CD4-positive, alpha-beta T cell (primary cell): ENCODE measurements at regions of chr17 and their contacts with region 1.

Region 1: DNA sequence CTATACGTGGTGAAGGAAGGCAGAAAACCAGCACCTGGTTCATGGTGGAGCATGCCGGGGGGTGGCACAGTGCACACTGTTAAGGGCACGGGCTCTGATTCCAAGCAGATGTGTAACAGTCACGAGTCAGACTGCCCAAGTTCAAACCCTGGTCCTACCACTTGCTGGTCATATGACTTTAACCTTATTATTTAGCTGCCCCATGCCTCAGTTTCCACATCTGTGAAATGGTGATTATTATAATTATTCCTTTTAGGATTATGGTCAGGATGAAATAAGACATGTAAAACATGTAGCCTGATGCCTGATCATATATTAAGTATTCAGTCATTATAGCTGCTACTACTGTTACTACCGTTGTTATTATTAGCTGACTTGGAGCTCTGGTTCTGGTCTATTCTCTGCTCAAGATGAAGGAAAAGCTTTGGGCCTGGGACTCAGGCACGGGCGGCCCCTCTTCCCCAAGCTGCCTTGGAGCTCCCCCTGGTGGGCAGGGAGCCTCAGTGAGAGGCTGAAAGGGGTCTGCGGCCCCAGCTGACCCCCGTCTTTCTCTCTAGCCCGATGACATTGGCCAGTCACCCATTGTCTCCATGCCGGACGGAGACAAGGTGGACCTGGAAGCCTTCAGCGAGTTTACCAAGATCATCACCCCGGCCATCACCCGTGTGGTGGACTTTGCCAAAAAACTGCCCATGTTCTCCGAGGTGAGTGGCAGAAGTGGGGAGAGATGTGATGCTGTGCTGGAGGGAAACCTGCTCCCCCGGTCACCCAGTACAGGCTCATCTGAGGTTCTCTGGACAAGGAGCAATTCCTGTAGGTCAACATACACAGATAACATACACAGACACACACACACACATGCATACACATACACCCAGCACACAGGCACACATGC is 14.0 kb downstream of the NR1D1 start:
- DNase-seq: peak; percentile 46 to 78 (median 59)
- ATAC-seq: peak; percentile 68
- H3K4me3 ChIP-seq: no peak overlapping the region
- H3K4me3 Mint-ChIP-seq: no peak overlapping the region
- H3K27ac ChIP-seq: no peak overlapping the region
- H3K27ac Mint-ChIP-seq: no peak overlapping the region
- H3K4me1 ChIP-seq: peaks cover 9% of the 10 kb centered on the region
- H3K4me1 Mint-ChIP-seq: peaks cover 15% of the 10 kb centered on the region
- H3K27me3 ChIP-seq: no peaks in the 10 kb centered on the region
- H3K27me3 Mint-ChIP-seq: no peaks in the 10 kb centered on the region
- CTCF ChIP-seq: peak; percentile 89

Region 2: DNA sequence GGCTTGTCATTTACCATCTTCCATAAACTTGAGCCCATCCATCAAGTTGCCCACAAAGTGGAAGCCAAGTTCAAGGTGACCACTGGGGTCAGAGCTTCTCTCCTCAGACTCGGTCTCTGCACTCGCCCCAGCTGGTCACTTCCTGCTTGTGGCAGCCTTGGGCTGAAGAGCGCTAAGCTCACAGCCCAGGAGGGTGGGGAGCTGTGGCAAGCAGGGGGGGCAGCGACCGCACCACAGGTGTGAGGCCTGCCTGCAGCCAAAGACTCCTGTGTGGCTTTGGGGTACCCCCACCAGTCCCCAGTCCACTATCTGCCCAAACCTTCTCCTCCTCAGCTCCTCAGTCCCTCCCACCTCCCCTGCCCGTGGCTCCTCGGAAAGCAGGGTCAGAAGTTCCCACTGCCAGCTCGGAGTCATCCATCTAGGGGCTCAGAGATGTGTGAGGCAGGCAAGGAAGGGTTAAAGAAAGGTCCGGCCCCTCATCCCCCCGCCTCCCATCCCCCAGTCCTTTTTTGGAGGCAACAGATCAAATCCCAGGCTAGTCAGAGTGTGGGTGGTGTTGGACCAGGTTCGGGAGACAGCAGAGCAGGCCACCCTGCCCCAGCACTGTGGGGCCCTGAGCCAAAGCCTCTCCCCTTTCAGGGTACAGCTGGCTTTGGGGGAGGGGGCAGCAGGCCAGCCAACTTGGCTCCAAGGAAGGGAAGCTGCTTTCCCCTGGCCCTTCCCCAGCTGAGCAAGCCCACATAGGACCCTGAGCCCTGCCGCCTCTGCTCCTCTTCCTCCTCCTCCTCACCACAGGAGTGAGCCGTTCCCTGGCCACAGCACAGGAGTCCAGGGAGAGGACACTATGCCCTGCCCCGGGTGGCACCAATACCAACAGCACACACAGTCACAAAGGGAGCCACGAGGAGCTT is 67.9 kb before region 1 on chr17:
- CTCF ChIA-PET with region 1: interaction called, 5 read pairs
- POLR2A ChIA-PET with region 1: interaction called, 3 read pairs
- intact Hi-C with region 1: loop called (anchors 1 kb)
- DNase-seq: no peak
- ATAC-seq: no peak
- H3K4me3 ChIP-seq: no peak overlapping the region
- H3K4me3 Mint-ChIP-seq: no peak overlapping the region
- H3K27ac ChIP-seq: no peak overlapping the region
- H3K27ac Mint-ChIP-seq: no peak overlapping the region
- H3K4me1 ChIP-seq: peaks cover 5% of the 10 kb centered on the region
- H3K4me1 Mint-ChIP-seq: peaks cover 6% of the 10 kb centered on the region
- H3K27me3 ChIP-seq: no peaks in the 10 kb centered on the region
- H3K27me3 Mint-ChIP-seq: no peaks in the 10 kb centered on the region
- CTCF ChIP-seq: no peak

Region 3: DNA sequence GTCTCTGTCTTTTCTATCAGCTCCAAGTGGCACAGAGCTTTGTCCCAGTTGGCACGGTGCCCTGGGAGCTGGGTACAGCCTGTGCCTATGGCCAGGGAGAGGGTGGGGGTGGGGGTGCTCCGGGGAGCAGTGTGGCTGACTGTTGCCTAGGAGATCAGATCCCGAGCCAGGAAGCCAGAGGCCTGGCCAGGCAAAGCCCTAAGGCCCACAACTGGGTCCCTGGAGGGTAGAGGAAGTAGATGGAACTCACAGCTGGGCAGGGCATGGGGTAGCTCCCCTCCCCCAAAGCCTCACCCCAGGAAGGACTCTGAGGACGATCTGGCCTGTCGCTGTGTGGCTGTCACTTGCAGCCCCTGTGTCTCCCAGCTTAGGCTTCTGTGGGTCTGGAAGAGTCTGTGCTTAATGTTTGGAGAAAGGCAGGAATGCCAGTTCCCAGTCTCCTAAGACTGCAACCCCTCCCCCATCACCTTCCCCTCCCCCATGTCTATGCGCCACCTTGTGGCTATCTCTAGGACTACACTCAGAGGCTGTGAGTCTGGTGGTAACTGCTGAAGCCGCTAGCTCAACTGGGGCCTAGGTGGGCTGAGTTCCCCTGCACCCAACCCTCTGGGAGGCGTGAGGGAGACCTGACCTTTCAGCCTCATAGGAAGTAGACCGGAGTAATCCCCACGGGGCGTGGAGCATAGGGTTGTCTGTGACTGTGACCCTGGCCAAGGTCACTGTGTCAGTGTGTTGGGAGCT is 11.0 kb before region 1 on chr17:
- CTCF ChIA-PET with region 1: interaction called, 24 read pairs
- POLR2A ChIA-PET with region 1: no interaction called
- intact Hi-C with region 1: no loop called
- DNase-seq: peak; percentile 58 to 82 (median 66)
- ATAC-seq: peak; percentile 91
- H3K4me3 ChIP-seq: no peak overlapping the region
- H3K4me3 Mint-ChIP-seq: no peak overlapping the region
- H3K27ac ChIP-seq: no peak overlapping the region
- H3K27ac Mint-ChIP-seq: peak overlapping the region; percentile 10
- H3K4me1 ChIP-seq: peaks cover 47% of the 10 kb centered on the region
- H3K4me1 Mint-ChIP-seq: peaks cover 50% of the 10 kb centered on the region
- H3K27me3 ChIP-seq: no peaks in the 10 kb centered on the region
- H3K27me3 Mint-ChIP-seq: no peaks in the 10 kb centered on the region
- CTCF ChIP-seq: peak; percentile 89

Region 4: DNA sequence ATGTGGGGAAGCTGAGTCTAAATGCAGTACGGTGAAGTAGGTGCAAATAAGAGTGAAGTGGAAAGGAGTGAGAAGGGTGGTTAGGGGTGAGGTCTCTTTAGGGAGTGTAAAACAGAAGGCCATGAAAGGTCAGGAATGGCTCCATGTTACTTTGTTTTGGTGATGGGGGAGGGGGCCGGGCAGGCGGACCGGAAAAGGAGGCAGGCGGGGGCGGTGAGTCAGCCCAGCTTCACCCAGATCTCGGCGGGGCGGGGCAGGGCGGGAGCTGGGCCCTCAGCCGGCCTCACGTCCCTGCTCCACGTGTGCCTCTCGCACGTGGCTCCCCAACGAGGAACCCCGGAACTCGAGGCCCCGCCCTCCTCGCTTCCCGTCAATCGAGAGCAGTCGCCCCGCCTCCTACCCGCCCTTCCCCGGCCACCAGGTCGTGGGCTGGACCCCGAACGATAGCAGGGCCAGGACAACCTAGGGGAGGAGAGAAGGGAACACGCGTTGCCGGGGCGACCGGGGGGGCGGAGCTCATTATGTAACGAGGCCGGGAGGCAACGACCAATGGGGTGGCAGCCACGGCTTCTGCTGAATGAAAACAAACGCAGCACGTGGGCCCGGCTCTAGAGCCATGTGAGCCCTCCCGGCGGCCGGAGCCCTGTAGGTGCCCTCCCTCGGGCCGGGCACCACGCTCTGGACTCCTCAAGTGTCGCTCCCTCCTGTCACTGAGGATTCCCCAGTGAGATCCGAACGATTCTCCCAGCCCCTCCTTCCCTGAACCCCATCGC is 12.6 kb after region 1 on chr17:
- CTCF ChIA-PET with region 1: interaction called, 13 read pairs
- POLR2A ChIA-PET with region 1: interaction called, 10 read pairs
- intact Hi-C with region 1: no loop called
- DNase-seq: peak; percentile 99 to 100 (median 99)
- ATAC-seq: peak; percentile 63
- H3K4me3 ChIP-seq: peak overlapping the region; percentile 85
- H3K4me3 Mint-ChIP-seq: peak overlapping the region; percentile 97
- H3K27ac ChIP-seq: peak overlapping the region; percentile 94 to 96
- H3K27ac Mint-ChIP-seq: peak overlapping the region; percentile 91
- H3K4me1 ChIP-seq: peaks cover 97% of the 10 kb centered on the region
- H3K4me1 Mint-ChIP-seq: peaks cover 90% of the 10 kb centered on the region
- H3K27me3 ChIP-seq: no peaks in the 10 kb centered on the region
- H3K27me3 Mint-ChIP-seq: no peaks in the 10 kb centered on the region
- CTCF ChIP-seq: no peak

Region 5: GRCh38 chr17:40209404-40210093 is 123.2 kb after region 1 on chr17:
- CTCF ChIA-PET with region 1: no interaction called
- POLR2A ChIA-PET with region 1: no interaction called
- intact Hi-C with region 1: no loop called
- DNase-seq: no peak
- ATAC-seq: no peak
- H3K4me3 ChIP-seq: no peak overlapping the region
- H3K4me3 Mint-ChIP-seq: no peak overlapping the region
- H3K27ac ChIP-seq: no peak overlapping the region
- H3K27ac Mint-ChIP-seq: no peak overlapping the region
- H3K4me1 ChIP-seq: no peaks in the 10 kb centered on the region
- H3K4me1 Mint-ChIP-seq: no peaks in the 10 kb centered on the region
- H3K27me3 ChIP-seq: no peaks in the 10 kb centered on the region
- H3K27me3 Mint-ChIP-seq: no peaks in the 10 kb centered on the region
- CTCF ChIP-seq: no peak